Esophagus squamous epithelium (tissue), 5 donors: ENCODE measurements at regions of chr12 and their contacts with region 1.

Region 1: DNA sequence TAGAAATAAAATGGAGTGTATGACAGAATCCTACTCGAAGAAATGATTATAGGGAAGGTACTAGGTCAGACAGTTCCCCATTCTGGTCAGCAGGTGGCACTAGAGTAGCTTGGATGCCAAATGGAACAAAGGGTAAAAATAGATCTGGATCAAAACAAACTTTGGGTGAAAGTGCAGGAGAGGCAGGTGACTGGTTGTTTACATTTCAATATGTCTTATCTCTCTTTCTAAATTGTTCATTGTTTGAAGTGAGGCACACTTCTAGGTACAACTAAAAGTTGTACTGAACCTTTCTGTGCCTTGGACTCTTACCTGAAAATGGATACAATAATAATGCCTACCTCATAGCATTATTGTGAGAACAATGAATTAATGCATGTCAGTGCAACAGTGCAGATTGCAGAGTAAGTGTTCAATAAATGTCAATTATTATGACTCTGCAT is 62.0 kb upstream of the OSBPL8 start:
- DNase-seq: no peak
- H3K4me3 ChIP-seq: no peak overlapping the region
- H3K27ac ChIP-seq: no peak overlapping the region
- H3K4me1 ChIP-seq: peaks cover 0 to 6% (median 0%) of the 10 kb centered on the region in 3 donors
- H3K27me3 ChIP-seq: no peaks in the 10 kb centered on the region
- CTCF ChIP-seq: peak; percentile 77 to 95 (median 94)
- POLR2A ChIP-seq: no peak

Region 2: GRCh38 chr12:76569685-76570604 is 51.7 kb before region 1 on chr12:
- intact Hi-C with region 1: no loop called
- DNase-seq: no peak
- H3K4me3 ChIP-seq: no peak overlapping the region
- H3K27ac ChIP-seq: no peak overlapping the region
- H3K4me1 ChIP-seq: no peaks in the 10 kb centered on the region
- H3K27me3 ChIP-seq: no peaks in the 10 kb centered on the region
- CTCF ChIP-seq: no peak
- POLR2A ChIP-seq: no peak

Region 3: GRCh38 chr12:76688631-76689030 is 67.0 kb after region 1 on chr12:
- intact Hi-C with region 1: no loop called
- DNase-seq: no peak
- H3K4me3 ChIP-seq: no peak overlapping the region
- H3K27ac ChIP-seq: no peak overlapping the region
- H3K4me1 ChIP-seq: peaks cover 0 to 10% (median 4%) of the 10 kb centered on the region in 3 donors
- H3K27me3 ChIP-seq: no peaks in the 10 kb centered on the region
- CTCF ChIP-seq: peak in 1 of 6 experiments; percentile 18
- POLR2A ChIP-seq: no peak

Region 4: GRCh38 chr12:76784600-76785051 is 163.0 kb after region 1 on chr12:
- intact Hi-C with region 1: loop called (anchors 5 kb)
- DNase-seq: no peak
- H3K4me3 ChIP-seq: no peak overlapping the region
- H3K27ac ChIP-seq: peak overlapping the region in 3 of 4 donors; percentile 4 to 64 (median 43)
- H3K4me1 ChIP-seq: peaks cover 0 to 45% (median 7%) of the 10 kb centered on the region in 3 donors
- H3K27me3 ChIP-seq: no peaks in the 10 kb centered on the region
- CTCF ChIP-seq: no peak
- POLR2A ChIP-seq: no peak

Region 5: GRCh38 chr12:76927170-76927784 is 305.7 kb after region 1 on chr12:
- intact Hi-C with region 1: loop called (anchors 5 kb)
- DNase-seq: no peak
- H3K4me3 ChIP-seq: no peak overlapping the region
- H3K27ac ChIP-seq: no peak overlapping the region
- H3K4me1 ChIP-seq: no peaks in the 10 kb centered on the region
- H3K27me3 ChIP-seq: no peaks in the 10 kb centered on the region
- CTCF ChIP-seq: peak in 5 of 6 experiments; percentile 34 to 64 (median 42)
- POLR2A ChIP-seq: no peak

Region 6: GRCh38 chr12:77010691-77011548 is 389.3 kb after region 1 on chr12:
- intact Hi-C with region 1: loop called (anchors 10 kb)
- DNase-seq: peak; percentile 1
- H3K4me3 ChIP-seq: no peak overlapping the region
- H3K27ac ChIP-seq: no peak overlapping the region
- H3K4me1 ChIP-seq: peaks cover 0 to 5% (median 0%) of the 10 kb centered on the region in 3 donors
- H3K27me3 ChIP-seq: no peaks in the 10 kb centered on the region
- CTCF ChIP-seq: peak; percentile 67 to 92 (median 86)
- POLR2A ChIP-seq: no peak